Endothelial cell of umbilical vein (primary cell): ENCODE measurements at regions of chr16 and their contacts with region 1.

Region 1: GRCh38 chr16:74813109-74813641 is 38.6 kb upstream of the FA2H start:
- DNase-seq: peak; percentile 61
- H3K4me3 ChIP-seq: no peak overlapping the region
- H3K27ac ChIP-seq: no peak overlapping the region
- H3K4me1 ChIP-seq: no peaks in the 10 kb centered on the region
- H3K27me3 ChIP-seq: peaks cover 0 to 8% of the 10 kb centered on the region in 2 experiments
- CTCF ChIP-seq: peak; percentile 97 to 98
- POLR2A ChIP-seq: no peak

Region 2: GRCh38 chr16:74709441-74709877 is 103.7 kb before region 1 on chr16:
- CTCF ChIA-PET with region 1: interaction called, 18 read pairs
- POLR2A ChIA-PET with region 1: no interaction called
- dilution Hi-C with region 1: no loop called
- intact Hi-C with region 1: loop called (anchors 1 kb)
- DNase-seq: peak; percentile 82
- H3K4me3 ChIP-seq: no peak overlapping the region
- H3K27ac ChIP-seq: no peak overlapping the region
- H3K4me1 ChIP-seq: no peaks in the 10 kb centered on the region
- H3K27me3 ChIP-seq: no peaks in the 10 kb centered on the region
- CTCF ChIP-seq: peak; percentile 94 to 96
- POLR2A ChIP-seq: no peak

Region 3: DNA sequence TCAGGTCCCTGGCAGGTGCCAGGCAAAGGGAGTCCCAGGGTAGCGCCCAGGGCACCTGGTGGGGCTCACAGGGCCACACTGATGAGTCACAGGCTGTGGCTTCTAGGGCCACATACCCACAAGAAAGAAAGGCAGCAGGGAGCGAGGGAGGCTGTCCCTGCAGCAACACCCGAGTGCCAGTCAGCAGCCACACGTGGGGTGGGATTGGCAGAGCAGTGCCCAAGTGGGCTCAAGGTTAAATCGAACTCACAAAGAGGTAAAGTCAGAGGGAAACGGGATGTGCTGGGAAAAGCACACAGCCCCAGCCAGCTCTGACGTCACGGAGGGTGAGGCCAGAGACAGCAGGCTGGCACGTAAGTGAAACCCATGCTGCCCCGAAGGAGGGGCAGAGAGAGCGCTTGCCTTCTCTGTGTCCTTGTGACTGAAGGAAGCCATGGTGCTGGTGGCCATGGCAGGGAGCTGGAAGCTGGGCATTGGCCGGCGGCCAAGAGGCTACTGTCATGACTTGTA is 72.3 kb before region 1 on chr16:
- CTCF ChIA-PET with region 1: no interaction called
- POLR2A ChIA-PET with region 1: no interaction called
- dilution Hi-C with region 1: no loop called
- intact Hi-C with region 1: no loop called
- DNase-seq: no peak
- H3K4me3 ChIP-seq: no peak overlapping the region
- H3K27ac ChIP-seq: no peak overlapping the region
- H3K4me1 ChIP-seq: no peaks in the 10 kb centered on the region
- H3K27me3 ChIP-seq: no peaks in the 10 kb centered on the region
- CTCF ChIP-seq: no peak
- POLR2A ChIP-seq: no peak

Region 4: GRCh38 chr16:74795104-74795503 is 18.1 kb before region 1 on chr16:
- CTCF ChIA-PET with region 1: interaction called, 11 read pairs
- POLR2A ChIA-PET with region 1: no interaction called
- dilution Hi-C with region 1: no loop called
- intact Hi-C with region 1: no loop called
- DNase-seq: no peak
- H3K4me3 ChIP-seq: no peak overlapping the region
- H3K27ac ChIP-seq: no peak overlapping the region
- H3K4me1 ChIP-seq: no peaks in the 10 kb centered on the region
- H3K27me3 ChIP-seq: peaks cover 10 to 19% of the 10 kb centered on the region in 2 experiments
- CTCF ChIP-seq: no peak
- POLR2A ChIP-seq: no peak

Region 5: DNA sequence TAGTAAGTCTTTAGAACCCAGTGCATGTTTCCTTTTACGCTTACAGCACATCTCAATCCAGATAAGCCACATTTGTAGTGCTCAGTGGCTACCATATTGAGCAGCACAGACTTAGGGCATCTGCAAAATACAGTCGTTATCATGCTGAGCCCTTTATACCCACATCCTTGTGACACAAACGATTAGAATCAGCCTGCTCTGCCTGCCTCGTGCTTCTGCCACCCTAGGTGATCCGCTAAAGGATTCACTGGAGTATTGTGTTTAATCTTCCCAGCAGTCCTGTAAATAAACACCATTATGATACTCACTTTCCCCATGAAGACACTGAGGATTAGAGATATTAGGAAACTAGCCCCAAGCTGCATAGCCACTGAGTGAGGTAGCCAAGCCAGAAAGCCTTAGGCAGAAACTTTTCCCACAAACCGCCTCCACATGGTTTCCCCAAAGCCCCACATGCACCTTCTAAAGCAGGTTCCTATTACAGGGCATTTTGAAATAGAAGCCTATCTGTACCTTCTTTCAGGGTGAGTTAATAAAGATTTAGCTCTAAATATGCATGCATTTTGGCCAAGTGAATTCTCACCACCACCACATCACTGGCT is 12.9 kb after region 1 on chr16:
- CTCF ChIA-PET with region 1: interaction called, 13 read pairs
- POLR2A ChIA-PET with region 1: no interaction called
- dilution Hi-C with region 1: no loop called
- intact Hi-C with region 1: no loop called
- DNase-seq: no peak
- H3K4me3 ChIP-seq: no peak overlapping the region
- H3K27ac ChIP-seq: no peak overlapping the region
- H3K4me1 ChIP-seq: no peaks in the 10 kb centered on the region
- H3K27me3 ChIP-seq: peaks cover 10 to 11% of the 10 kb centered on the region in 2 experiments
- CTCF ChIP-seq: no peak
- POLR2A ChIP-seq: no peak

Region 6: DNA sequence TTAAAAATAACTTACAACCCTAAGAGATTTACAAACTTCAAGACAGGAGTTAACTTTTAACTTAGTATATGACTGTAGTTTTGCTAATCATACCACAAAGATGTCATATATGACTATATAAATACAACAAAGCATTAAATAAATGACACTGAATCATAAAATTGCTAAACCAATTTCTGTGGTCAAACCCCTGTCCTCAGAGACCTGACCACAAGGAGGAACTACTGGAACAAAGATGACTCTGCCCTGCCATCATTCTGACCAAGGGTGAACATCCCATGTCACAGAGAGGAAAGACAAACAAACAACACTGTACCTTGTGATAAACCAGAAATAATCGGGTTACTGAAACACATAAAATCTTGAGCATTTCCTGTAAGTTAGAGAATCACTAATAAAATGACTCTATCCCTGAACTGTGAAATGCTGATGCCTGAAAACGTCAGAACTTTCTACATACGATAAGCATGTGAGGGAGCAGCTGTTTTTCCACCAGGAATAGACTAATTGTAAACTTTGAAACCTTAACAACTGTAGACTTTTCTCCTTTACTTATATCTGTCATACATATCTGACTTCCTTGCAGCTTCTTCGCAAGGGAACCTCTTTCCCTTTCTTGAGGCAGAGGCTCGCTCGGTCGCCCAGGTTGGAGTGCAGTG is 123.9 kb after region 1 on chr16:
- CTCF ChIA-PET with region 1: no interaction called
- POLR2A ChIA-PET with region 1: no interaction called
- dilution Hi-C with region 1: no loop called
- intact Hi-C with region 1: no loop called
- DNase-seq: no peak
- H3K4me3 ChIP-seq: no peak overlapping the region
- H3K27ac ChIP-seq: no peak overlapping the region
- H3K4me1 ChIP-seq: no peaks in the 10 kb centered on the region
- H3K27me3 ChIP-seq: no peaks in the 10 kb centered on the region
- CTCF ChIP-seq: no peak
- POLR2A ChIP-seq: no peak